ENCODE measurements at regions of chr9 and their contacts with region 1.

Region 1: DNA sequence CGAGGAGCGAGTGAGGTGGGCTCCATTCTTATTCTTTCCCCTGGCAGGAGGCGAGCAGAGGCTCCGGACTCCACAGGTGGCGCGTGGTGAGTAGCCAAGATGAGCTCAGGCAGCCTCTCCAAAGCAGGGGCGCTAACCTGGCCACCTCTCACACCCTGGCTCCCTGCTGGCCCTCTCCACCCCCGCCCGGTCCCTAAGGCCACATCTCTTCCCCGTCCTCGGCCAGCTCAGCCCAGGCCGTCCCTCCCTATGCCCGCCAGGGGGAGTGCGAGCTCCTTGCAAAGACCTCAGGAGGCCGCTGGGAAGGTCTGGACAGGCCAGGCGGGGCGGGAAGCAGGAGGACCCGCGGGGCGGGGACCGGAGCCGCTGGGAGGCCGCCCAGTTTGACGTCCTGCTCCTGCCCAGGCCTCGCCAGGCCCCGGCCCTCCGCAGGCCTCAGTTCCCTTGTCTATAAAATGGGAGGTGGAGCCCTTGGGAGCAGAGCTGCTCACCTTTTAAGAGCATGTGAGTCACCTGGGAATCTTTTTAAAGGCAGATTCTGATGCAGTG is 46.3 kb upstream of the GGTA1 start:
- DNase-seq: peak; percentile 91
- H3K4me3 ChIP-seq: no peak overlapping the region
- H3K27ac ChIP-seq: no peak overlapping the region
- H3K4me1 ChIP-seq: no peaks in the 10 kb centered on the region
- H3K27me3 ChIP-seq: peaks cover 0 to under 1% of the 10 kb centered on the region in 2 experiments
- CTCF ChIP-seq: peak; percentile 98 to 99
- POLR2A ChIP-seq: no peak

Region 2: GRCh38 chr9:121598965-121599871 is 53.3 kb after region 1 on chr9:
- CTCF ChIA-PET with region 1: interaction called, 5 read pairs
- POLR2A ChIA-PET with region 1: no interaction called
- dilution Hi-C with region 1: no loop called
- intact Hi-C with region 1: loop called (anchors 2 kb)
- DNase-seq: no peak
- H3K4me3 ChIP-seq: peak overlapping the region in 2 of 3 experiments; percentile 21 to 37
- H3K27ac ChIP-seq: no peak overlapping the region
- H3K4me1 ChIP-seq: peaks cover 4% of the 10 kb centered on the region
- H3K27me3 ChIP-seq: peaks cover 39 to 44% of the 10 kb centered on the region in 2 experiments
- CTCF ChIP-seq: no peak
- POLR2A ChIP-seq: no peak

Region 3: GRCh38 chr9:121686930-121687541 is 141.1 kb after region 1 on chr9:
- CTCF ChIA-PET with region 1: interaction called, 88 read pairs
- POLR2A ChIA-PET with region 1: no interaction called
- dilution Hi-C with region 1: no loop called
- intact Hi-C with region 1: loop called (anchors 1 kb)
- DNase-seq: peak; percentile 78
- H3K4me3 ChIP-seq: no peak overlapping the region
- H3K27ac ChIP-seq: no peak overlapping the region
- H3K4me1 ChIP-seq: no peaks in the 10 kb centered on the region
- H3K27me3 ChIP-seq: no peaks in the 10 kb centered on the region
- CTCF ChIP-seq: peak; percentile 90 to 91
- POLR2A ChIP-seq: no peak

Region 4: DNA sequence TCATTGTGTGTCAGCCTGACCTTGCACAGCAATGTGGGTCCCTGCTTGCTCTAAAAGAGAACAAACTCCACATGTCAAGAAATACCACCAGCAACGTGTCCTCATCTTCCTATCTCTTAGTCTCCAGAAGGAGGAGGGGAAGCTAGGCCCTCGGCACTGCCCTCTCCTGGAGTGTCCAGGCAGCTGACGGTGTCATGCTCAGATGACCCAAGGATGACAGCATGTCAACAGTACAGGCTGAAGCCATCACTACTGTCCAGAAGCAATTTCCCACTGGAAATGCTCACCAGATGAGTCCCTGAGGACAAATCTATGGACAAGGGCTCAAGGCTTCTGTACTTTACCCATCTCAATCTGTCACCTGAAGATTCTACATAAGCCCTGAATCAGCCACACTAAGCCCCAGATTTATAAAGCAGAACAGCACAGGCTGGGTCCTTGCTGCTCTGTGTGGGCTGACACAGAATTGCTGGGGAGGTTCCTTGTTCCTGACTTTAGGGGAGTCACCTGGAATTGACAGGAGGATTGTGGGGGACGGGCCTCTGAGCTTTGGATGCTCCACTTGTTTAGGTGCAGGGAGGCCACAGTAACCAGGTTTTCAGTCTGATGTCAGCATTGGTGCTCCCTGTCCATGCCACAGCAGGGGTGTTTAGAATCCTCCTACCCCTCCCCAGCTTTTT is 315.7 kb after region 1 on chr9:
- CTCF ChIA-PET with region 1: interaction called, 5 read pairs
- POLR2A ChIA-PET with region 1: no interaction called
- dilution Hi-C with region 1: no loop called
- intact Hi-C with region 1: loop called (anchors 1 kb)
- DNase-seq: peak; percentile 32
- H3K4me3 ChIP-seq: no peak overlapping the region
- H3K27ac ChIP-seq: no peak overlapping the region
- H3K4me1 ChIP-seq: peaks cover 6% of the 10 kb centered on the region
- H3K27me3 ChIP-seq: no peaks in the 10 kb centered on the region
- CTCF ChIP-seq: peak; percentile 46 to 53
- POLR2A ChIP-seq: no peak

Region 5: DNA sequence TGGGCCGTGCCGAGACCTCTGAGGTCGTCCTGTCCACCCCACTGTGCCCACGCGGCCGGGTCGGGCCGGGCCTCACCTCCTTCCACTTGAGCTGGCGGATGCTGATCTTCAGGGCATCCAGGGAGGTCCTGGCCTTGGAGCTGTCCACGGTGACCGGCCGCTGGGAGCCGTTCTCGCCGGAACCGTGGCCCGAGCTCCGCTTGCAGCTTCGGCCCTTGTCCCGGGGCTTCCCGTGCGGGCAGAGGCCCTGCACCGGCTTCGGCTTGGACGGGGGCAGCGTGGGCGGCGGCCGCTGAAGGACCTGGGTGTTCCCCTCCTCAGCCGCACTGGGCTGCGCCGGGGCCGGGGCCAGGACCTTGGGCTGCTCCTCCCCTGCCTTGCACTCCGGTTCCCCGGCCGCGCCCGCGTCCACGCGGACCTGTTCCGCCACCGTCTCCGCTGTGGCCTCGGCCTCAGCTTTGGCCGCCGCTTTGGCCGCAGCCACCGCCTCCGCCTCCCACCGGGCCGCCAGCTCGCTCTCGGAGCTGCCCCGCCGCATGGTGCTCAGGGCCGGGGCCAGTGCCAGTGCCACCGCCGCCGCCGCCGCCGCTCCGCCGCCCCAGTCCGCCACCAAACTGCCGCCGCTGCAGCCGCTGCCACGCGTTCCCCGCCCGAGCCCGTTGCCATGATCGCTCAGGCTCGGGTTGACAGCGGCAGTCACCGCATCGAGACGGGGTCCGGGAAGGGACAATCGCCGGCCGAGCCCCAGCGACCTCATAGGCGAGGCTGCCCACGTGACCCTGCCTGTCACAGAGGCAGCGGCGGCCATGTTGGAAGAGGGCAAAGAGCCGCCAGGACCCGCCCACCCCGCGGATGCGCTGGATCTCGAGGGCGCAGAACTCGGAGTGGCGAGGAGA is 546.9 kb after region 1 on chr9 and contains the start of gene TTLL11:
- CTCF ChIA-PET with region 1: interaction called, 7 read pairs
- POLR2A ChIA-PET with region 1: no interaction called
- dilution Hi-C with region 1: no loop called
- intact Hi-C with region 1: loop called (anchors 2 kb)
- DNase-seq: peak; percentile 93
- H3K4me3 ChIP-seq: peak within 1 kb of the TSS; percentile 74 to 82 (median 78)
- H3K27ac ChIP-seq: no peak within 1 kb of the TSS
- H3K4me1 ChIP-seq: peaks cover 11% of the 10 kb centered on the region
- H3K27me3 ChIP-seq: peaks cover 0 to 2% of the 10 kb centered on the region in 2 experiments
- CTCF ChIP-seq: no peak
- POLR2A ChIP-seq: peak; percentile 56
- total RNA-seq, gene TTLL11: 4.9 and 8.1 TPM in 2 replicates

Region 6: DNA sequence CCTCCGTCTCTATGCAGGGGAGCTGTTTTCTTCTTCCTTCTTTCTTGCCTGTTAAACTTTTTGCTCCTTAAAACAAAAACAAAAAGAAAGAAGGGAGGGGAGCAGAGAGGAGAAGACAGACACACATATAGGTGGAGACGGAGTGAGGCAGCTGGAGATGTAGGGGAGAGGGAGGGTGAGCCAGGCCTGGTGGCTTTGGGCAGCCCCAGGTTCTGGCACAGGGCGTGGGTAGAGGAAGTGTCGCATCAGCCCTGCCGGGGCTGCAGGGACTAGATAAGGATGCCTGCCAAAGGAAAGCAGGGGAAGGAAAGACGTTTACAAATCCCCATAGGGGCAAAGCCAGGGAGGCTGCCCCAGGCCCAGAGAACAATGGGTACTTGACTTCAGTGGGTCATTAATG is 786.1 kb after region 1 on chr9:
- CTCF ChIA-PET with region 1: no interaction called
- POLR2A ChIA-PET with region 1: no interaction called
- dilution Hi-C with region 1: no loop called
- intact Hi-C with region 1: no loop called
- DNase-seq: peak; percentile 83
- H3K4me3 ChIP-seq: no peak overlapping the region
- H3K27ac ChIP-seq: peak overlapping the region; percentile 13
- H3K4me1 ChIP-seq: peaks cover 21% of the 10 kb centered on the region
- H3K27me3 ChIP-seq: no peaks in the 10 kb centered on the region
- CTCF ChIP-seq: no peak
- POLR2A ChIP-seq: peak; percentile 26

Measured in endothelial cell of umbilical vein (primary cell).